ENCODE measurements at regions of chr1 and their contacts with region 1.

Region 1: GRCh38 chr1:92994105-92994712 is 32.9 kb upstream of the DIPK1A start:
- DNase-seq: peak; percentile 93
- H3K4me3 Mint-ChIP-seq: no peak overlapping the region
- H3K27ac Mint-ChIP-seq: peak overlapping the region; percentile 80
- H3K4me1 Mint-ChIP-seq: peaks cover 38% of the 10 kb centered on the region
- H3K27me3 Mint-ChIP-seq: no peaks in the 10 kb centered on the region

Region 2: DNA sequence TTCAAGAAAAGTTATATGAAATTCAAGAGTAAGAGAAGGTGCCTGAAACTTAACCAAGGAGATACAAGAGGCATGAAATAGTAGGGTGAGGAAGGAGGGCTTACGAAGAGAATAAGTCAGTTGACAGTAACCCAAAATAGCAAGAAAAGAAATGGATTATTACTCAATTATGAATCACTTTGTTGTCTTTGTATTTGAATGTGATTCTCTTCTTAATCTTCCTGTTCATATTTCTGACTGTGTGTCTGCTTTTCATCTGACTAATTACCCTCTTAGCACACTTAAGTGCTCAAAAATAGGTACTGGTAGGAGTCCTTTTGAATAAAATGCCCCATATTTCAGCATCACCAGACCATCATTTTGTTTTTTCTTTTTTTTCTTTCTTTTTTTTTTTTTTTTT is 734.9 kb before region 1 on chr1:
- intact Hi-C with region 1: no loop called
- DNase-seq: no peak
- H3K4me3 Mint-ChIP-seq: no peak overlapping the region
- H3K27ac Mint-ChIP-seq: no peak overlapping the region
- H3K4me1 Mint-ChIP-seq: peaks cover 2% of the 10 kb centered on the region
- H3K27me3 Mint-ChIP-seq: no peaks in the 10 kb centered on the region

Region 3: GRCh38 chr1:92754000-92754718 is 240.1 kb before region 1 on chr1:
- intact Hi-C with region 1: loop called (anchors 10 kb)
- DNase-seq: no peak
- H3K4me3 Mint-ChIP-seq: no peak overlapping the region
- H3K27ac Mint-ChIP-seq: no peak overlapping the region
- H3K4me1 Mint-ChIP-seq: no peaks in the 10 kb centered on the region
- H3K27me3 Mint-ChIP-seq: peaks cover 23% of the 10 kb centered on the region

Region 4: GRCh38 chr1:92858564-92859399 is 135.4 kb before region 1 on chr1:
- intact Hi-C with region 1: loop called (anchors 1 kb)
- DNase-seq: peak; percentile 91
- H3K4me3 Mint-ChIP-seq: peak overlapping the region; percentile 64
- H3K27ac Mint-ChIP-seq: peak overlapping the region; percentile 42
- H3K4me1 Mint-ChIP-seq: peaks cover 20% of the 10 kb centered on the region
- H3K27me3 Mint-ChIP-seq: no peaks in the 10 kb centered on the region

Region 5: DNA sequence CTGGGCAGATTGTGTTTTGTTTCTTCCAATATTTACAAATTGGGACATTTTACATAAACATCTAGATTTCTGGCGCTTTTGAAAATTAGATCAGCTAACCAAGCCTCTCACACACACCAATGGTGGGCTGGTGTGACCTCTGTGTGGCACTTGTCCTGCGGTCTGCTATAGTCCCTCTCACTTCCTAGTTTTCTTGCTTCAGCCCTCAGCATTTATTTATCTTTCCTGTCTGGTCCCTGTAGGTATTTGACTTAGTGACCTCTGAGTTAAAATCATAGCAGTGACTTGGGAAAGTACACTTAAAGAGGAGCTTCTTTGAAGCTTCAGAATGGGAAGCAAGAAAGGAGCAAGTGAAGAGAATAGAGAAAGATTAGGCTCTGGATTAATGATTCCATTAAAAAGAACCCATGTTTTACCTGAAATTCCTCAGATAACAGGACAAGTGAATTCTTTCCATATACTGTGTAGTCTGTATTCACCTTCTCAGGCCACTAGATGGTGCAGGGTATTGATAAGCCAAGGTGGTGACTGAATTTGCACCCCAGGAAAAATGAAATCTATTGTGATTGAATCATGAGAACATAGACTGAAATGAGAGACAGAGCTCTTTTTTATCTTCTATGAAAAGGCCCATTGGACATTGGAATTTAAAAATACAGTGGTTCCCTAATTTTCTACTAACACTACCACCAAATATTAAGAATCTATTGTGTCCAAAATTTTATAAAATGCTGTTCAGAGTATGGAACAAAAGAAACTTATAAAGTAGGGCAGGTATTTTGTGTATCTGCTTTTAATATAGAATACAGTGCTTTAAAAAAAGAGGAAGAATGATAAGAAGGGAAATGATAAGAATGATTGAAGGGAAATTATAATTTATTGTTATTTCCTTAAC is 25.8 kb before region 1 on chr1:
- intact Hi-C with region 1: loop called (anchors 1 kb)
- DNase-seq: peak; percentile 79
- H3K4me3 Mint-ChIP-seq: no peak overlapping the region
- H3K27ac Mint-ChIP-seq: peak overlapping the region; percentile 5
- H3K4me1 Mint-ChIP-seq: peaks cover 24% of the 10 kb centered on the region
- H3K27me3 Mint-ChIP-seq: no peaks in the 10 kb centered on the region

Region 6: DNA sequence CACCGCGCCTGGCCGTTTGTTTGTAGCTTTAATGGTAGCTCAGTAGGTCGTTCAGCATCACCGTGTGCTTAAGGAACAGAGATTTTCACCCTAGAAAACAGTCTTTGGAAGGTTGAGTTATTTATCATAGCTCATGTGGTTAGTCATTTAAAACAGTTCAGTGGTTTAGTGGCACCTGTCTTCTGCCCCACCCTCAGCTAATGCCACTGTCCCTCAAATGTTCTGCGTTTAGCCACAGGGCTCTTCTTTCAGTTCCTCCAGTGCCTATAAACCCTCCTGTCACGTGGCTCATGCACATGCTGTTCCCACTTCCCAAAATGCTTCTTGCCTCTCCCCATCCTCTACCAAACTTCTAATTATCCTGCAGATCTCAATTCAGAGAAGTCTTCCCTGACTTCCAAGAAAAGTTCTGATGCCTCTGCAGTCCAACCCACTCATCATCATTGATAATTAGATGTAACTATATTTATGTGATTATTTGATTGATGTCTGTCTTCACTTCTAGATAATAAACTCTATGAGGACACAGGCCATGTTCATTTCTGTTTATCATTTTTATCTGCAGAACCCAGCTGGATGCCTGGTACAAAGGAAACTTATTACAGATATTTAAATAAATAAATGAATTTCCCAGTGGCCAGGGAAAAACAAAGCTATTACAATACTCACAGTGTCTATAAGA is 18.5 kb before region 1 on chr1:
- intact Hi-C with region 1: loop called (anchors 2 kb)
- DNase-seq: peak; percentile 59
- H3K4me3 Mint-ChIP-seq: peak overlapping the region; percentile 6
- H3K27ac Mint-ChIP-seq: peak overlapping the region; percentile 79
- H3K4me1 Mint-ChIP-seq: peaks cover 60% of the 10 kb centered on the region
- H3K27me3 Mint-ChIP-seq: no peaks in the 10 kb centered on the region

Region 7: GRCh38 chr1:92980732-92981647 is 13.2 kb before region 1 on chr1:
- intact Hi-C with region 1: loop called (anchors 1 kb)
- DNase-seq: peak; percentile 87
- H3K4me3 Mint-ChIP-seq: peak overlapping the region; percentile 78
- H3K27ac Mint-ChIP-seq: peak overlapping the region; percentile 97
- H3K4me1 Mint-ChIP-seq: peaks cover 60% of the 10 kb centered on the region
- H3K27me3 Mint-ChIP-seq: no peaks in the 10 kb centered on the region

Region 8: DNA sequence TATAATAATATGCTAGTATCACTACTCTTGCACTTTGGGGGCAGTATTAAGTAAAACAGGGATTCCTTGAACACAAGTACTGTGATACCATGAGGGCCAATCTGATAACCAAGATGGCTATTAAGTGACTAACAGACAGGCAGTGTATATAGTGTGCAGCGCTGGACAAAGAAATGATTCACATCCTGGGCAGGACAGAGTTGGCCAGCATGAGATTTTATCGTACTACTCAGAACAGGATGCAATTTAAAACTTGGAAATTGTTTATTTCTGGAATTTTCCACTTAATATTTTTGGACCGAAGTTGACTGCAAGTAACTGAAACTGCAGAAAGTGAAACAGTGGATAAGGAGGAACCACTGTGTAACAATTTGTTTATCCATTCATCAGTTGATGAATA is 810.2 kb after region 1 on chr1:
- intact Hi-C with region 1: no loop called
- DNase-seq: no peak
- H3K4me3 Mint-ChIP-seq: no peak overlapping the region
- H3K27ac Mint-ChIP-seq: no peak overlapping the region
- H3K4me1 Mint-ChIP-seq: no peaks in the 10 kb centered on the region
- H3K27me3 Mint-ChIP-seq: peaks cover 19% of the 10 kb centered on the region

Measured in activated CD4-positive, alpha-beta T cell treated with anti-CD3 and anti-CD28 coated beads, Interleukin-2, amount 10 ng/mL, durations not matched to agents 24 days and 14 days (primary cell).